ENCODE measurements at regions of chr3 and their contacts with region 1.

Region 1: DNA sequence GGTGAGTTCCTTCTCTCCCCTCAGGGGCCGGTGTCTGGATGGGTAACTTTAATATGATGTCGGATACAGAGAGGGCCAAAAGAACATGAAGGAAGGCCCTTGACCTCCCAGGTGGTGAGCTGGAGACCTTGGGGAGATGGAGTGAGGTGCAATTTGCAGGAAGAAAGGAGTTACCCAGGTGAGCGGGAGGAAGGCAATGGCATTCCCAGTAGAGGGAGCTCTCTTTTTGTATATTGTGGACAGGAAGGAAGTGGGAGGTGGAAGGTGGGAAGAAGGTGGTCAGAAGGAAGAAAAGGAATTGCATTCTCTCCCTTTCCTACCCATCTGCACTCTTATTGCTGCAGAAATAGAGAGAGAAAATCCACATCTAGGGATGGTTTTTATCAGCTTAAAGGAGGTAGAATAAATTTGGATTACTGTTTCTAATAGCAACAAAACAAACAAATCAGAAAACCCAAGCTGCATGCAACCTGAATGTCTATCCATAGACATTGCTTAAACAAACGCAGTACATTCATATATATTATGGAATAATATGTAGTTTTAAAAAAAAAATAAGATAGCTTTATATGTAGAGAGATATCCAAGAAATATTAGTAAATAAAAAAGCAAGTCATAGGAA is 169.0 kb upstream of the TSC22D2 start:
- DNase-seq: peak; percentile 72
- H3K4me3 Mint-ChIP-seq: peak overlapping the region; percentile 59
- H3K27ac Mint-ChIP-seq: peak overlapping the region; percentile 45
- H3K4me1 Mint-ChIP-seq: peaks cover 21% of the 10 kb centered on the region
- H3K27me3 Mint-ChIP-seq: no peaks in the 10 kb centered on the region
- CTCF ChIP-seq: peak; percentile 90

Region 2: GRCh38 chr3:150251187-150252062 is 12.3 kb after region 1 on chr3:
- CTCF ChIA-PET with region 1: interaction called, 11 read pairs
- intact Hi-C with region 1: no loop called
- DNase-seq: no peak
- H3K4me3 Mint-ChIP-seq: no peak overlapping the region
- H3K27ac Mint-ChIP-seq: no peak overlapping the region
- H3K4me1 Mint-ChIP-seq: peaks cover 45% of the 10 kb centered on the region
- H3K27me3 Mint-ChIP-seq: no peaks in the 10 kb centered on the region
- CTCF ChIP-seq: no peak

Region 3: DNA sequence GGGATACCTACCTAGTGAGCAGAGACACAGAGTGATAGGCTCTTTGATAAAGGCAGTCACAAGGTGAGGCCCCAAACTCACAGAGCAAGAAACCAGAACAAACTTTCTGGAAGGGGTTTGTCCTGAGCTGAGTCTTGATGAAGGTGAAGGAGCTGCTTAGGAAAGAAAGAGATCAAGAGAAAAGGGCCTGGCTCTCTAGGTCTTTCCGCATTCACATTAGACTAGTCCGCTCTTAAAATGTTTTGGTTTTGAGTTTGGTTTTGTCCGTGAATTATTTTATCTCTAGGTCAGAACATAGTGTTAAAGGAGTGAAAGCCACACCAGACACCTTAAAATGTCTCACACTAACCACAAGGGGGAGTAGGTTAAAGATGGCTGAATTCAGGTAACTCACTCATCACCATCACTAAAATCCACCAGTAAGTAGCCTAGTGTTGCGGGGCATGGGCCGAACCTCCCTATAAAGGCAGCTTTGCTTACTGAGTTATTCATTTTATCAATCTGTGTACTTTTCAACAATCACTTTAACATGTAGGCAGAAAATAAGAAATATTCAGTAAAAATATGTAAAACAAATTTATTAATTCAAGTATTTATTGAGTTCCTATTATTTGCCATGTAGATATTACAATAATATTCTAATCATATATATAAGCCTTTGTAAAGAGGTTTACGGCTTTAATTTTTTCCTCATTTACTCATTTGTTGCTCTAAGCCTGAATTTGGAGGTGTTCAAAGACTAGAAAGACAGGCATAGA is 47.5 kb after region 1 on chr3:
- CTCF ChIA-PET with region 1: interaction called, 5 read pairs
- intact Hi-C with region 1: loop called (anchors 1 kb)
- DNase-seq: peak; percentile 45
- H3K4me3 Mint-ChIP-seq: no peak overlapping the region
- H3K27ac Mint-ChIP-seq: no peak overlapping the region
- H3K4me1 Mint-ChIP-seq: peaks cover 7% of the 10 kb centered on the region
- H3K27me3 Mint-ChIP-seq: no peaks in the 10 kb centered on the region
- CTCF ChIP-seq: peak; percentile 69

Region 4: GRCh38 chr3:150357923-150358607 is 119.0 kb after region 1 on chr3:
- CTCF ChIA-PET with region 1: no interaction called
- intact Hi-C with region 1: no loop called
- DNase-seq: no peak
- H3K4me3 Mint-ChIP-seq: no peak overlapping the region
- H3K27ac Mint-ChIP-seq: no peak overlapping the region
- H3K4me1 Mint-ChIP-seq: peaks cover 10% of the 10 kb centered on the region
- H3K27me3 Mint-ChIP-seq: no peaks in the 10 kb centered on the region
- CTCF ChIP-seq: no peak

Region 5: DNA sequence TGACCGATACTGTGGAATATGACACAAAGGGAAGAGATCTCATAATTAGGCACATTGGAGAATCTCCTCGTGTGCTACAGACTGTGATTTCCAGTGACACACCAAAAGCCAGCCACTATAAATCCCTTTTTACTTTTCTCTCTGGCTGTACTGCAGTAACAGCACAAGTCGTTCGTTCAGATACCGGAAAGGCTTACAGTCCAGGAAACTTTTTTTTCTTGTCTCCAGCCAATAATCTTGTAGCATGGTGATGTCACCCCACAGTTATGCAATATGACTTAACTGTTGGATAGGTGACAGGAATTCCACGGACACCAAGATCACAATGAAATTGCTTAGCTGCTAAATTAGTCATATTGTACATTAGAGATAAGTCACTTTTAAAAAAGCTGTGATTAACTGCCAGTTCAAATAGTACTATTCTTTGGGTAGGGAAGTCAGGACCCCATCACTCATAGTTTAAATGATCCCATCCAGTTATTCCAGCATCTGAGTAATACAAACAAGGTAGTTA is 132.7 kb after region 1 on chr3:
- CTCF ChIA-PET with region 1: interaction called, 4 read pairs
- intact Hi-C with region 1: loop called (anchors 2 kb)
- DNase-seq: peak; percentile 91
- H3K4me3 Mint-ChIP-seq: peak overlapping the region; percentile 62
- H3K27ac Mint-ChIP-seq: peak overlapping the region; percentile 94
- H3K4me1 Mint-ChIP-seq: peaks cover 63% of the 10 kb centered on the region
- H3K27me3 Mint-ChIP-seq: no peaks in the 10 kb centered on the region
- CTCF ChIP-seq: no peak

Region 6: GRCh38 chr3:150653110-150653561 is 414.0 kb after region 1 on chr3:
- CTCF ChIA-PET with region 1: no interaction called
- intact Hi-C with region 1: no loop called
- DNase-seq: no peak
- H3K4me3 Mint-ChIP-seq: no peak overlapping the region
- H3K27ac Mint-ChIP-seq: no peak overlapping the region
- H3K4me1 Mint-ChIP-seq: no peaks in the 10 kb centered on the region
- H3K27me3 Mint-ChIP-seq: peaks cover 20% of the 10 kb centered on the region
- CTCF ChIP-seq: no peak

Measured in Calu3 (cell line).